ENCODE measurements at regions of chr2 and their contacts with region 1.

Region 1: DNA sequence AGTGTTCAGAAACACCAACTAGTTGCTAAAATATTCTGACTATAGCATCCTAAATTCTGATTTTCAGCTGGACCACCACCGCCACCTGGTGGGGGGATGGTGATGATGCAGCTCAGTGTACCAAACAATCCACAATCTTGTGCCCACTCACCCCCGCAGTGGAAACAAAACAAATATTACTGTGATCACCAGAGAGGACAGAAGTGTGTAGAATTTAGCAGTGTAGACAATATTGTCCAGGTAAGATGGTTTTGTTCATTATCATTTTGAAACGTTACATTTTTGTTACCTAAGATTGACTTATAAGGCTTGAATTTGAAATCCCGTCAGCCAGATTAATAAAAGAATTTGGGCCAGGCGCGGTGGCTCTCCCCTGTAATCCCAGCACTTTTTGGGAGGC is 31.7 kb upstream of the UBXN4 start:
- DNase-seq: peak; percentile 63
- H3K4me3 ChIP-seq: no peak overlapping the region
- H3K27ac ChIP-seq: no peak overlapping the region
- H3K4me1 ChIP-seq: no peaks in the 10 kb centered on the region
- H3K27me3 ChIP-seq: no peaks in the 10 kb centered on the region
- CTCF ChIP-seq: peak; percentile 92

Region 2: GRCh38 chr2:133726973-133727372 is 1983.0 kb before region 1 on chr2:
- CTCF ChIA-PET with region 1: no interaction called
- POLR2A ChIA-PET with region 1: no interaction called
- intact Hi-C with region 1: no loop called
- DNase-seq: no peak
- H3K4me3 ChIP-seq: no peak overlapping the region
- H3K27ac ChIP-seq: no peak overlapping the region
- H3K4me1 ChIP-seq: no peaks in the 10 kb centered on the region
- H3K27me3 ChIP-seq: no peaks in the 10 kb centered on the region
- CTCF ChIP-seq: no peak

Region 3: GRCh38 chr2:135473567-135473966 is 236.4 kb before region 1 on chr2:
- CTCF ChIA-PET with region 1: interaction called, 23 read pairs
- POLR2A ChIA-PET with region 1: no interaction called
- intact Hi-C with region 1: loop called (anchors 5 kb)
- DNase-seq: peak; percentile 46
- H3K4me3 ChIP-seq: no peak overlapping the region
- H3K27ac ChIP-seq: no peak overlapping the region
- H3K4me1 ChIP-seq: no peaks in the 10 kb centered on the region
- H3K27me3 ChIP-seq: no peaks in the 10 kb centered on the region
- CTCF ChIP-seq: peak; percentile 54

Region 4: GRCh38 chr2:135797497-135798274 is 87.7 kb after region 1 on chr2:
- CTCF ChIA-PET with region 1: no interaction called
- POLR2A ChIA-PET with region 1: no interaction called
- intact Hi-C with region 1: no loop called
- DNase-seq: peak; percentile 87
- H3K4me3 ChIP-seq: no peak overlapping the region
- H3K27ac ChIP-seq: no peak overlapping the region
- H3K4me1 ChIP-seq: no peaks in the 10 kb centered on the region
- H3K27me3 ChIP-seq: no peaks in the 10 kb centered on the region
- CTCF ChIP-seq: peak; percentile 98

Measured in A673 (cell line).